Lower leg skin (tissue), 4 donors: ENCODE measurements at regions of chr16 and their contacts with region 1.

Region 1: GRCh38 chr16:27449434-27450195 is 47.6 kb downstream of the IL21R start:
- DNase-seq: no peak
- H3K4me3 ChIP-seq: no peak overlapping the region
- CTCF ChIP-seq: peak in 1 of 3 donors; percentile 43
- POLR2A ChIP-seq: no peak

Region 2: DNA sequence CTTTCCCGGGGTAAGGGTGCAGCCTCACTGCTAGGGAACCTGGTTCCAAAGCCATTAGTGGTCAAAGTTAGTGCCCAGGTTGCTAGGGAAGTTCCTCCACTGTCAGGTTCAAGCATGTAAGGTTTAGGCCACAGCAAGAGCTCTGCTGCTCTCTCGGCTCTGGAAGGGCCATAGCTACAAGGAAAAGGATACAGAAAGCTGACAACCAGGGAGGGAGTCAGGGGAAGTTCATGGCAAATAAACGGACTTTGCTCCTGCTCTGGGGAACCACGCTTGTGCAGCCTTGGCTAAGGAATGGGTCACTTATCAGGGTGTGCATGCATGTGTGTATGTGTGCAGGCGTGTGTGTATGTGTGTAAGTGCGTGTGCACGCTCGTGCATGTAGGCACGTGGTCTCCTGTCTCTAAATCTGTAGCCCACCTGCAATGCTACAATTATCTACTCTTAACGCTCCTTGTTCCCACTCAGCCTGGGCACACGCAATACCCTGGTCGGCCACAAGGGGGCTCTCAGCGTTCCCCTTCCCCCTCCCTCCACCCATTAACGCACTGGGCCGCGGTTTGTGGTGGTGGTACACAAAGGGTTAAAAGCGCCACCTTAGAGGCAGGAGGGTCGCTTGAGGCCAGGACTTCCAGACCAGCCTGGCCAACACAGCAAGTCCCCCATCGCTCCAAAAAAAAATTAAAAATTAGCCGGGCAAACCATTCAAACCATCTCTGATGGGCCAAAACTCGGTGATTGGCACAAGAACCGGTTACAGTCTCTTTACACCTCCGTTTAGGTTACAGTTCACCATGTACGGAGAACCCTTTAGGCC is 294.7 kb before region 1 on chr16:
- intact Hi-C with region 1: loop called (anchors 10 kb)
- DNase-seq: peak; percentile 32 to 88
- H3K4me3 ChIP-seq: no peak overlapping the region
- CTCF ChIP-seq: peak in 1 of 3 donors; percentile 86
- POLR2A ChIP-seq: no peak